ENCODE measurements at regions of chr2 and their contacts with region 1.

Region 1: DNA sequence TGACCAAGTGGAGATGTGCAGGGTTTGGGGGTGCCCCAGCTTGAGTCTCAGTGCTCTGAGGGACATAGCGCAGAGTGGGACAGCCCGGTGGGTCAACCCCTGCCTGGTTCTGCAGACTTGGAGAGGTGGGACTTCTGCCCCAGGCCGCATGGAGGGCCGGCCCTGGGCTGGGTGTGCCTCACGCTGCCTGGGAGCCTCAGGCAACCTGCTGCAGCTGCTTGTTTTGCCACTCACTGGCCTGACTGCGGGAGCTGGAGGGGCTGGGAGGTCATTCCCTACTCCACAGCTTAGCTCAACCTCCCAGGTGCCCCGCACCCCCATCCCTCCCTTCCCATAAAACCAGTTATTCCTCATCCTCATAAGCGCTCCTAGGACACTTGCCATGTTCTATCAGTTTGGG is 33.1 kb downstream of the ODC1 start:
- DNase-seq: no peak
- ATAC-seq: no peak
- H3K4me3 ChIP-seq: no peak overlapping the region
- H3K27ac ChIP-seq: no peak overlapping the region
- H3K4me1 ChIP-seq: peaks cover 25% of the 10 kb centered on the region
- H3K27me3 ChIP-seq: no peaks in the 10 kb centered on the region
- CTCF ChIP-seq: no peak
- EP300 ChIP-seq: no peak
- POLR2A ChIP-seq: no peak
- RAD21 ChIP-seq: no peak

Region 2: GRCh38 chr2:9739531-9739964 is 675.5 kb before region 1 on chr2:
- CTCF ChIA-PET with region 1: no interaction called
- POLR2A ChIA-PET with region 1: no interaction called
- RAD21 ChIA-PET with region 1: no interaction called
- SMC1A ChIA-PET with region 1: no interaction called
- in situ Hi-C with region 1: no loop called
- intact Hi-C with region 1: no loop called
- DNase-seq: no peak
- ATAC-seq: no peak
- H3K4me3 ChIP-seq: no peak overlapping the region
- H3K27ac ChIP-seq: no peak overlapping the region; the same call in 1 of the 2 replicates
- H3K4me1 ChIP-seq: peaks cover 7% of the 10 kb centered on the region
- H3K27me3 ChIP-seq: no peaks in the 10 kb centered on the region; a peak in 1 of 4 replicates
- CTCF ChIP-seq: no peak
- EP300 ChIP-seq: no peak
- POLR2A ChIP-seq: no peak
- RAD21 ChIP-seq: no peak

Region 3: DNA sequence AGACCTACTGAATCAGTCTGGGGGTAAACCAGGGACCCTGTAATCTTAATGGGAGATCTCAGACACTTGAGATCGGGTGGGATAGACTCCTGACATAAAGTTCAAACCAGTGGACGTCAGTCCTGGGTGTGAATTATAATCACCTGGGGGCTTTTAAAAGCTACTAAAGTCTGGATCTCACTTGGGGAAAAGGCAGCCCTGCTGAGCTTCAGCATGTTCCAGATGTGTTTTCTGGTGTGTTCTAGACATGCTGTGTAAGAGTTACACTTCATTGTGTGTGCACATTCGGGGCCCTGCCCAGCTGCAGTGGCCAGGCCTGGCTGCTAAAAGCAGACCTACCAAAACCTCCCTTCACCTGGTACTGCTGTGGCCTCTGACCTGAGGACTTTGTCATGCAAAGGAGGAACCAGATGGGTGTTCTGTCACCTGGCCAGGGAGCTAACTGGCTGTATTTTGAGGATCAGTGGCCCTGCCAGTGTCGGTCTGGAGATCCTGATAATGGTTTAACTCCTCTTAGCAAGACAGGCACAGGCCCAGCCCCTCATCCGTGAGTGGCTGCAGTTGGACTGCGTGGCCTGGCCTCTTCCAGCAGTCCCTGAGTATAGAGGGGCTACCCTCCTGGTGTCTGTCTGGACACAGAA is 281.9 kb before region 1 on chr2:
- CTCF ChIA-PET with region 1: interaction called, 53 read pairs
- POLR2A ChIA-PET with region 1: interaction called, 15 read pairs
- RAD21 ChIA-PET with region 1: interaction called, 181 read pairs
- SMC1A ChIA-PET with region 1: interaction called, 45 read pairs
- in situ Hi-C with region 1: loop called (anchors 5 kb)
- intact Hi-C with region 1: no loop called
- DNase-seq: no peak
- ATAC-seq: peak; percentile 8
- H3K4me3 ChIP-seq: no peak overlapping the region
- H3K27ac ChIP-seq: no peak overlapping the region
- H3K4me1 ChIP-seq: no peaks in the 10 kb centered on the region
- H3K27me3 ChIP-seq: no peaks in the 10 kb centered on the region
- CTCF ChIP-seq: no peak
- EP300 ChIP-seq: no peak
- POLR2A ChIP-seq: peak; percentile 66
- RAD21 ChIP-seq: no peak